Activated T-helper 2 cell treated with anti-CD3 and anti-CD28 coated beads, Interferon-gamma antibody, Interleukin-2, Interleukin-4, amounts not matched to agents 10 μg/mL and 5 μg/mL and 100 μg/mL, durations not matched to agents 14 hours and 24 hours and 36 hours (primary cell): ENCODE measurements at regions of chr2 and their contacts with region 1.

Region 1: DNA sequence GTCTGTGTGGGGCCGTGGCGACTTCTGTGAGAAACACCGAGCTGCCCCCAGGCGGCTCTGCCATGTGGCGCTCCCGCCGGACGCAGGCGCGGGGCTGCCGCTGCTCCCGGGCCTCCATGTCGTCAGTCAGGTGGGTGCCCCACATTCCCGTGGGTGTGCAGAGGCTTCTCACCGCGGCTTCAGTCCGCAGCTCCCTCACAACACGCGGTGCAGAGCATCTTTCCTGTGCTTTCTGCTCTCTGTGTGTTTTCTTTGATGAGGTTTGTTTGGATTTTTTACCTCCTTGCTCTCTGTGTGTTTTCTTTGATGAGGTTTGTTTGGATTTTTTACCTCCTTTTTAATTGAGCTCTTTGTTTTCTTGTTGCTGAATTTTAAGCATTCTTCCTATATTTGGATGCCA is 13.0 kb downstream of the AQP12A start:
- DNase-seq: no peak
- H3K4me3 Mint-ChIP-seq: peak overlapping the region; percentile 23
- H3K27ac Mint-ChIP-seq: peak overlapping the region; percentile 43
- H3K4me1 Mint-ChIP-seq: peaks cover 10% of the 10 kb centered on the region
- H3K27me3 Mint-ChIP-seq: peaks cover 21% of the 10 kb centered on the region

Region 2: DNA sequence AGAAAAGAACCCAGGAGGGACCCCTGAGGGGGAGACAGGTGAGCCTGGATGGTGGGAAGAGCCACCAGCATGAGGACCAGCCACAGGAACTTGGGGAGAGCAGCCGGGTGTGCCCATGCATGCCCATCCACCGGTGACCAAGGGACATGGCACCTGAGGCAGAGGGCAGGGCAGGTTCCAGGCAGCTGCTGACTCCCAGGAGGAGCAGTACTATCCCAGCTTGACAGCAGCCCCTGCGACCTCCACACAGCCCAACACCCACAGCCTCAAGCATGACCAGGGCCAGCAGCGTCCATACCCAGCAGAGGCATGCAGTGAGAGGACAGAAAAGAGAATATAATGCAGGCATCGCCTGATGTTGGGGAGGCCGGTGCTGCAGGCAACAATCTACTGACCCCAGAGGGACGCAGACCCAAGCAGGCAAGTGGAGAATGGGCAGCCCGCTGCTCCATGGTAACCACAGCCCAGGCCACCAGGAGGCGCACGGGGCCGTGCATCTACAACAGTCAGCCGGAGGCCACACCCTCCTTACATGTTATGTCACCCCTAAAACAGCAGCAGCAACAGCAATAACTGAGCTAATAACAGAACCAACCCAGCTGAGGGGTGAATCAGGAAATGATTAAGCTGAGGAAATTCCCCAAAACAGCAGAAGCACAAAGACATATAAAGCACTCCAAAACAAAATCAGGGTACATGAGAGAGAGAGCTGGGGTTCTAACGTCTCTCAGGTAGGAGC is 190.9 kb before region 1 on chr2:
- intact Hi-C with region 1: loop called (anchors 1 kb)
- DNase-seq: peak; percentile 74
- H3K4me3 Mint-ChIP-seq: no peak overlapping the region
- H3K27ac Mint-ChIP-seq: peak overlapping the region; percentile 43
- H3K4me1 Mint-ChIP-seq: peaks cover 11% of the 10 kb centered on the region
- H3K27me3 Mint-ChIP-seq: no peaks in the 10 kb centered on the region

Region 3: GRCh38 chr2:240714747-240715725 is 10.4 kb after region 1 on chr2:
- intact Hi-C with region 1: no loop called
- DNase-seq: no peak
- H3K4me3 Mint-ChIP-seq: no peak overlapping the region
- H3K27ac Mint-ChIP-seq: no peak overlapping the region
- H3K4me1 Mint-ChIP-seq: no peaks in the 10 kb centered on the region
- H3K27me3 Mint-ChIP-seq: no peaks in the 10 kb centered on the region

Region 4: DNA sequence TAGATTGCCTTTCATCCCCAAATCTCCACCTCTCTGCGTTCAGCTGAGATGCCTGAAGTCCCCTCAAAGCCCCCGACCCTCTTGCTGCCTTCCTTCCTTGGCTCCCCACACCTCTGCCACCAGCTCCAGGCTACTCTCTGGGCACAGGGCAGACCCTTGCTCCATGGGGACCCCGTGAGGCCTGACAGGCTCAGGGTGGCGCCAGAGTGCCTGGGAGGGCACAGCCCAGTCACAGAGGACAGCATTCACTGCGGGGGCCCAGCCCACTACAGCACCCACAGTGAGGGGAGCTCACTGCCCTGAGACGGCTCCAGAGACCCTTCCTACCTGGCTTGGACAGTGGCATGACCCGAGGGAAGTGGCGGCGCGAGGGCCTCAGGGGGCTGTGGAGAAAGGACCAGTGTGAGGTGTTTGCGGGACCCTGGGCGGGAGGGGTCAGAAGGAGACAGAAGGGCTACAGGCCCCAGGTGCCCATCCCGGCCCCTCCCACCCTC is 38.0 kb after region 1 on chr2:
- intact Hi-C with region 1: no loop called
- DNase-seq: no peak
- H3K4me3 Mint-ChIP-seq: no peak overlapping the region
- H3K27ac Mint-ChIP-seq: no peak overlapping the region
- H3K4me1 Mint-ChIP-seq: no peaks in the 10 kb centered on the region
- H3K27me3 Mint-ChIP-seq: no peaks in the 10 kb centered on the region